Common myeloid progenitor, CD34-positive (primary cell): ENCODE measurements at regions of chr5 and their contacts with region 1.

Region 1: GRCh38 chr5:96702503-96703383 is 40.6 kb downstream of the CAST start:
- DNase-seq: peak; percentile 62 to 84 (median 78)
- H3K4me3 ChIP-seq: peak overlapping the region; percentile 57 to 83 (median 78)
- H3K27ac ChIP-seq: peak overlapping the region in 1 of 2 experiments; percentile 57
- H3K4me1 ChIP-seq: peaks cover 4 to 15% (median 12%) of the 10 kb centered on the region in 4 experiments
- H3K27me3 ChIP-seq: no peaks in the 10 kb centered on the region

Region 2: DNA sequence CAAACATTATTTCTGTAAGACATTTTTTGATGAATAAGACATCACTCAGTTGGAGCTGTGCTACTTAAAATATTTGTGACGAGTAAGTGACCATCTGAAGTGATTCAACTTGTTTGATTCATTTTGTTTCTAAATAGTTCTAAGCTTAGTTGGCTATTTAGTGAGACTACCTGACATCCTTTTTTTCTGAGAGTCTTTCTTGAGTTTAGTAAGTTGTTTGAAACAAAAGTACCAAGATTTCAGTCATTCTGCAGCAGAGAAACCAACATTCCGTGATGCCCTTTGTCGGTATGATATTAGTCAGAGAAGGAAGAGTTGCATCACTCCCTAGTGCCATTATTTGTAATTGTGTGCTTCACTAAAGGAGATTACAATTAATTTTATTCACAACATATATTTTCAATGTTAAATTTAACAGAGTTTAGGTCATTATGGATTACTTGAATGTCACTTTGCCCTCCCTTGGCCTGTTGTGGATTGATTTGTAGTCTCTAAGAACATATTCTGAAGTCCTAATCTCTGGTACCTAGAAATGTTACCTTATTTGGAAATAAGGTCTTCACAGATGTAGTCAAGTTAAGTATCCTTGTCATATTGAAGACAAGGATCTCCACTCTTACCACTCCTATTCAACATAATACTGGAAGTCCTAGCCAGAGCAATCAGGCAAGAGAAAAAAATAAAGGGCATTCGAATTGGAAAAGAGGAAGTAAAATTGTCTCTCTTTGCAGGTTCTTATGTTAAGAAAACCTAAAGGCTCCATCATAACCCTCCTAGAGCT is 481.9 kb before region 1 on chr5:
- CTCF ChIA-PET with region 1: no interaction called
- POLR2A ChIA-PET with region 1: no interaction called
- DNase-seq: no peak
- H3K4me3 ChIP-seq: no peak overlapping the region
- H3K27ac ChIP-seq: no peak overlapping the region
- H3K4me1 ChIP-seq: no peaks in the 10 kb centered on the region
- H3K27me3 ChIP-seq: no peaks in the 10 kb centered on the region

Region 3: DNA sequence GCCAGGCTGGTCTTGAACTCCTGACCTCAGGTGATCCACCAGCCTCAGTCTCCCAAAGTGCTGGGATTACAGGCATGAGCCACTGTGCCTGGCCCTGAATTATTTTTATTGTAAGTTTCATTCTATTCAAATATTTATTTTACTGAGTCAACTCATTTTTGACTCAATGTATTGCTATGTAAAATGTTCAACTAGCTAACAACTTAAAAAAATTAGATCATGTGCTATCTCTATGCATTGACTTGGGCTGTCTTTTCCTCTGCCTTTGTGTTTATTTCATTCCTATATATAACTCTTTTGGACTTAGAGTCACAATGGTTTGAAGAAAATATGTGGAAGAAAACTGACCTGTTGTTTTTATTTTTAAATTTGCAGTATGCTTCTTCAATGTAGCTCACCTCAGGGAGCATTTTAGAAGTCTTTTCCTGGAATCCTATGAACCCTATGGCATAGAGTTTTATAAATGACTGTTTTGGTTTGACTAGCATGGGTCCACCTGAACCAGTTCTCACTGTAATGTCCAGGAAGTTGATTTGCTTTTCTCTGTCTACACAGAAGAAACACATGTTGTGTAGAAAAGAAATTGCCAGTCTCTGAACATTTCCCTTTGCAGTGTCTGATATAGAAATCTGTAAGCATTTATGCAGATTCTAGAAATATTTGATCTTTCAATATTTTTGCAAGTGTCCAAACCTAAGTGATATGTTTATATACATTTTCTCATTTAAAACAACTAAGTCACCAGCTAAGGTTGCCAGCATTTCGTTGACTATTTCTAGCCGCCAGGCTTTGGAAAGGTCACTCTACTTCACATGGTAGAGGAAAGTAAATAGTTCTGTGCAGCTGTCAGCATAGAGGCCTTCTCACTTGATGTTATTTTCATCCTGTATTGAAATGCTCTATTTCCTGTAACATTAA is 408.5 kb before region 1 on chr5:
- CTCF ChIA-PET with region 1: no interaction called
- POLR2A ChIA-PET with region 1: no interaction called
- DNase-seq: no peak
- H3K4me3 ChIP-seq: no peak overlapping the region
- H3K27ac ChIP-seq: no peak overlapping the region
- H3K4me1 ChIP-seq: no peaks in the 10 kb centered on the region
- H3K27me3 ChIP-seq: no peaks in the 10 kb centered on the region

Region 4: DNA sequence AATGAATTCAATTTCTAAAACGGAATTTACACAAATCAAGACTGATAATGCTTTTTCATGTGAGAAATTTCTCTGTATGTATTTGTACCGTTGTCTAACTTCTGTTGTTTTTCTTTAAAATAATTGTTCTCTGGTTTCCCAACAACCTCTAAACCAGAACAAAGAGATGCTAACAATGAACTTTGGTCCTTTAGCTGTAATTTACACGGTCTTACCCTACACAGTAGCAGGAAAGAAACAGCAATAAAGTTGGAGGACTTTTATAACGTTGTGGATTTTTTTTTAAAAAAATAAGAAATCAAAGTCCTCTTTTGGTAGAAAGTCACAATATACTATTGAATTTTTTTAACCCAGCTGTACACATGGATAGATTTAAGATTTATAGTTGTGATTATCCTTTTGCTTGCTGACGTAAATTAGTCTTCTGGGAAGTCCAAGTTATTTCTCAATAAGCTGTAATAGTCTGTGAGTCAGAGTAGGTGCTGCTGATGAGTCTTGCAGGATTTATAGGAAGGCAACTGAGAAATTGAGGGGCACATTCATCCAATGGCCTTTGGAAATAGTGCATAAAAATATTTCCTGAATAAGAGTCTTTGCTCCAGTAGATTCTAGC is 192.9 kb before region 1 on chr5:
- CTCF ChIA-PET with region 1: no interaction called
- POLR2A ChIA-PET with region 1: no interaction called
- DNase-seq: no peak
- H3K4me3 ChIP-seq: no peak overlapping the region
- H3K27ac ChIP-seq: no peak overlapping the region
- H3K4me1 ChIP-seq: no peaks in the 10 kb centered on the region
- H3K27me3 ChIP-seq: no peaks in the 10 kb centered on the region

Region 5: DNA sequence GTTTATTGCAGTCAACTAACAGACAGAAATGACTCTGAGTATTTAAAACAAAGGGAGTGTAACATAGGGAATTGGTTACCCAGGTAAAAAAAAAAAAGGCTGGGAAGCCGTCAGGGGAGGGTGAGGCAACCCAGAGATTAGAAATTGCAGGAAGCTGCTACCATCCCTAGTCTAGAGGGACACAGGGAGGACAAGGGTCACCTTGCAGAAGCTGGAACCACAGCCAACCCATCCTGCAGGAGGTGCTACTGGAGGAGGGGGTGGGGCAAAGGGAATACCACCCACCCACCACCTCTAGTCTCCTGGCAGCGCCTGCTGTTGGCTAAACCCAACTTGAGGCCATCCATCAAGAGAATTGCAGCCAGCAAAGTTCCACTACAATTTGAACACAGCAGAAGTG is 34.0 kb before region 1 on chr5:
- CTCF ChIA-PET with region 1: no interaction called
- POLR2A ChIA-PET with region 1: no interaction called
- DNase-seq: no peak
- H3K4me3 ChIP-seq: no peak overlapping the region
- H3K27ac ChIP-seq: no peak overlapping the region
- H3K4me1 ChIP-seq: peaks cover 0 to under 1% (median 0%) of the 10 kb centered on the region in 4 experiments
- H3K27me3 ChIP-seq: no peaks in the 10 kb centered on the region

Region 6: GRCh38 chr5:96687812-96688453 is 14.8 kb before region 1 on chr5:
- CTCF ChIA-PET with region 1: interaction called, 19 read pairs
- POLR2A ChIA-PET with region 1: no interaction called
- DNase-seq: peak; percentile 52 to 73 (median 71)
- H3K4me3 ChIP-seq: peak overlapping the region in 1 of 7 experiments; percentile 52
- H3K27ac ChIP-seq: no peak overlapping the region
- H3K4me1 ChIP-seq: no peaks in the 10 kb centered on the region
- H3K27me3 ChIP-seq: no peaks in the 10 kb centered on the region

Region 7: GRCh38 chr5:96714951-96715451 is 12.3 kb after region 1 on chr5:
- CTCF ChIA-PET with region 1: interaction called, 10 read pairs
- POLR2A ChIA-PET with region 1: interaction called, 4 read pairs
- DNase-seq: peak; percentile 77 to 94 (median 91)
- H3K4me3 ChIP-seq: peak overlapping the region in 1 of 7 experiments; percentile 19
- H3K27ac ChIP-seq: peak overlapping the region; percentile 29 to 83
- H3K4me1 ChIP-seq: peaks cover 0 to 17% (median 10%) of the 10 kb centered on the region in 4 experiments
- H3K27me3 ChIP-seq: no peaks in the 10 kb centered on the region